Activated T-helper 2 cell treated with anti-CD3 and anti-CD28 coated beads, Interferon-gamma antibody, Interleukin-2, Interleukin-4, amounts not matched to agents 10 μg/mL and 5 μg/mL and 100 μg/mL, durations not matched to agents 14 hours and 24 hours and 36 hours (primary cell): ENCODE measurements at regions of chr14 and their contacts with region 1.

Region 1: DNA sequence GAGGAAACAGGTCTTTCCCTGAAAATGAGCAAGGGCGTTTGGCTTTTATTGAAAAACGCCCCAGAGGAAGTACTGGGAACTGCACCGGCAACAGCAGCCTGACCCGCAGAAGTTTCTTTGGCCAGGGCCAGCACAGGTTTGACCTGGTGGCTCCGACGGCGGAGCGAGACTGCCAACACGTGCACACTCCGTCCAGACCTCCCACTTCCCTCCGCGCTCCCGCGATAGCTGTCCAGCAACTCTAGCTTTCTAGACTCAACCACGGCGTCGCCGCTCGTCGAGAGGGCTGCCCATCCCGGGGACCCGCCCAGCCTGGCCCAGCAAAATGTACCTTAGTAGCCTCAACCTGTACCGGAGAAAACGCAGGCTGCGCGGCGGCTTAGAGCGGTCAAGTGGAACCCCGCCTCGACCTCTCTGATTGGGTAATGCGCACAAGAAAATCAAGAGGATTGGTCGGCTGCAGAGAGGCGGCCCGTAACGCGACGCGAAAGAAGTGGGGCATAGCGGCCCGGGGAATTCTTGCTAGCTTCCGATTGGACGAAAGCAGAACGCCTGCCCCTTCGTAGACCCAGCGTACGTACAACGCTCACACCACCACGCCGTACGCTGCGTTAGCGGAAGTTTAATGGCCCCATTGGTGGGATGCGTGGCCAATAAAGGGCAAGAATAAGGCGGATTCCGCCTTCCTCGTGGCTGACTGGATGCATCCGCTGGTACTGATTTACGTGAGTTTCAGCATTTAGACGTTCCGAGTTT is at the start of gene WDR89:
- DNase-seq: peak; percentile 97
- H3K4me3 Mint-ChIP-seq: peak within 1 kb of the TSS; percentile 92
- H3K27ac Mint-ChIP-seq: peak within 1 kb of the TSS; percentile 98
- H3K4me1 Mint-ChIP-seq: peaks cover 22% of the 10 kb centered on the region
- H3K27me3 Mint-ChIP-seq: no peaks in the 10 kb centered on the region
- total RNA-seq, gene WDR89: 25.5 and 25.9 TPM in 2 replicates

Region 2: DNA sequence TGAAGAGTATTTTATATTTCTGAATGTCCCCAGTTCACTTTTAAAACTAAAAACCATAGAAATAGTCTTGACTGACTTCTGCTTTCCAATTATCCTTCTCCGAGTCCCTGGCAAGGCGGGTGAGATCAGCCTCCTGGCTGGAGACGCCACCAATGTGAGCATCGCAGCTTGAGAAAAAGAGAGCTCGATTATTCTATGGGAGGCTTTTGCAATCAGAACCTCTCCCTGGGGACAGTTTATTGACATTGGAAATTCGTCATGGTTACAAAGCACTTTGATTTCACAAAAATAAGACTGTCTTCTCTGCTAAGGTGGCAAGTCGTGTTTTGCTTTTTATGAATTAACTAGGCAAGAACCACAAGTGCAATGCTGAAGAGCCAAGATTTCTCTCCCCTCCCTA is 299.3 kb before region 1 on chr14:
- intact Hi-C with region 1: no loop called
- DNase-seq: no peak
- H3K4me3 Mint-ChIP-seq: no peak overlapping the region
- H3K27ac Mint-ChIP-seq: no peak overlapping the region
- H3K4me1 Mint-ChIP-seq: no peaks in the 10 kb centered on the region
- H3K27me3 Mint-ChIP-seq: peaks cover 18% of the 10 kb centered on the region

Region 3: DNA sequence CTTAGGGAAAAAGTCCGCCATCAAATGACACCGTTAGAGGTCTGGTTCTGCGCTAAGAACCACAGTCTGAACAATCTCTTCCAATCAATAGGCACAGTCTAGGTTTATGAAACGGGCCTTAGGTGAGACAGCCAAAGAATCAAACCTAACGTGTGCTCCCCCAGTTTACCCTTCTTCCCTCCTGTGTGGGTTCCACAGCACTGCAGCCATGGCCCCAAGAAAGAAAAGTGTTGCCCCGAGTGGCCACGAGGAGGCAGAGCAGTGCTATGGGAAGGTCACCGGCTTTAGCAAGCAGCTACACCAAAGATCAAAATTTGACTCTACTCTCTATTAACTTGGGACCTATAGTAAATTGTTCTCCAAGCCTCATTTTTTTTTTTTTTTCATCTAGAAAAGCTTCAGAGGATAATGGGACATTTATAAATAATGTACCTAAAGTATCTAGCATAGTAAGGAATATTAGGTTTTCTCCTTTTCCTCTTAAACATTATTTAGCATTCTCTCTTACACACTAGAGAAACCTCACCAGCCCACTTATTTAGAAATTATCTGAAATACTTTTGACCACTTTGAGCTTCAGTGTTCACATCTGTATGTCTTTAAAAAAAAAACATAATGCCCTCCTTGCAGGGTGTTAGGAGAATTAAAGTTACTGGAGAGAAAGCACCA is 252.8 kb before region 1 on chr14:
- intact Hi-C with region 1: loop called (anchors 5 kb)
- DNase-seq: peak; percentile 48
- H3K4me3 Mint-ChIP-seq: no peak overlapping the region
- H3K27ac Mint-ChIP-seq: no peak overlapping the region
- H3K4me1 Mint-ChIP-seq: peaks cover 8% of the 10 kb centered on the region
- H3K27me3 Mint-ChIP-seq: no peaks in the 10 kb centered on the region

Region 4: DNA sequence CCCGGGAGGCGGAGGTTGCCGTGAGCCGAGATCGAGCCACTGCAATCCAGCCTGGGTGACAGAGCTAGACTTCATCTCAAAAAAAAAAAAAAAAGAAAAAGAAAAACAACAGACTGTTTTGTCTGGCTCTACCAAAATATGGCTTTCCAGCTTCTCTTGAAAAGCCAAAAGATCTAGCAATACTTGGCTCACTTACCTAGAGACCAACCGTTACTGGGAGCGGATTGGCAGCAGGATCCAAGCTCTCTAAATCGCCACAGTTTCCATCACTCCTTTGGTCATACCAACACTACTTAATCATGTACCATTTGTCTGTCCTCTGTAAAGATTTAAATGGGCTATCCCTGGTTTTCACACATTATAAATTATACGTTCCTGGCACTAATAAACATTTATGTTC is 235.3 kb before region 1 on chr14:
- intact Hi-C with region 1: no loop called
- DNase-seq: no peak
- H3K4me3 Mint-ChIP-seq: no peak overlapping the region
- H3K27ac Mint-ChIP-seq: no peak overlapping the region
- H3K4me1 Mint-ChIP-seq: peaks cover 11% of the 10 kb centered on the region
- H3K27me3 Mint-ChIP-seq: no peaks in the 10 kb centered on the region

Region 5: GRCh38 chr14:63478010-63478409 is 163.6 kb before region 1 on chr14:
- intact Hi-C with region 1: loop called (anchors 2 kb)
- DNase-seq: peak; percentile 26
- H3K4me3 Mint-ChIP-seq: no peak overlapping the region
- H3K27ac Mint-ChIP-seq: peak overlapping the region; percentile 43
- H3K4me1 Mint-ChIP-seq: peaks cover 38% of the 10 kb centered on the region
- H3K27me3 Mint-ChIP-seq: no peaks in the 10 kb centered on the region

Region 6: GRCh38 chr14:63727774-63728728 is 86.4 kb after region 1 on chr14 and contains the start of gene SGPP1:
- intact Hi-C with region 1: loop called (anchors 1 kb)
- DNase-seq: peak; percentile 80
- H3K4me3 Mint-ChIP-seq: peak within 1 kb of the TSS; percentile 100
- H3K27ac Mint-ChIP-seq: peak within 1 kb of the TSS; percentile 94
- H3K4me1 Mint-ChIP-seq: peaks cover 29% of the 10 kb centered on the region
- H3K27me3 Mint-ChIP-seq: peaks cover 22% of the 10 kb centered on the region
- total RNA-seq, gene SGPP1: 13.0 and 14.0 TPM in 2 replicates

Region 7: DNA sequence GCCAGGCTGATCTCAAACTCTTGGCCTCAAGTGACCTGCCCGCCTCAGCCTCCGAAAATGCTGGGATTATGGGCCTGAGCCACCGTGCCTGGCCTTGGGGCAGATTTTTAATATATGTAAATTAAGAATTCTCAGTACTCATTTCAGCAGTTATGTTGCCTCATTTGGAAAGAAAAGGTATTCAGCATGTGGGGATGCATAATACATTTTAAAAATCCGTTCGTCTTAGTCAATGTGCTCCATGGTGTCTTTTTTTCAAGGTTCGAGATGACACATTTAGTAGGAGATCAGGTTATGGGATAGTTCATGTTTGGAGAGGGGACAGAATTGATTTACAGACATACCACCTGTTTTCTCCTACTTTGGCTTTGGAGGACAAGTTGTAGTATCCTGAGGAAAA is 221.4 kb after region 1 on chr14:
- intact Hi-C with region 1: loop called (anchors 5 kb)
- DNase-seq: no peak
- H3K4me3 Mint-ChIP-seq: no peak overlapping the region
- H3K27ac Mint-ChIP-seq: peak overlapping the region; percentile 54
- H3K4me1 Mint-ChIP-seq: peaks cover 29% of the 10 kb centered on the region
- H3K27me3 Mint-ChIP-seq: peaks cover 15% of the 10 kb centered on the region